OCI-LY7 (cell line): ENCODE measurements at regions of chr12 and their contacts with region 1.

Region 1: GRCh38 chr12:56448860-56449621 is at the start of gene TIMELESS:
- DNase-seq: peak; percentile 92
- H3K4me3 ChIP-seq: peak within 1 kb of the TSS; percentile 88
- H3K27ac ChIP-seq: peak within 1 kb of the TSS; percentile 90
- H3K4me1 ChIP-seq: peaks cover 25% of the 10 kb centered on the region
- CTCF ChIP-seq: no peak
- total RNA-seq, gene TIMELESS: 44.8 and 46.5 TPM in 2 replicates

Region 2: GRCh38 chr12:55336002-55336401 is 1113.0 kb before region 1 on chr12:
- CTCF ChIA-PET with region 1: no interaction called
- POLR2A ChIA-PET with region 1: no interaction called
- intact Hi-C with region 1: no loop called
- DNase-seq: no peak
- H3K4me3 ChIP-seq: no peak overlapping the region
- H3K27ac ChIP-seq: no peak overlapping the region
- H3K4me1 ChIP-seq: no peaks in the 10 kb centered on the region
- CTCF ChIP-seq: no peak

Region 3: GRCh38 chr12:56127888-56128669 is 321.0 kb before region 1 on chr12 and contains the start of gene ESYT1:
- CTCF ChIA-PET with region 1: no interaction called
- POLR2A ChIA-PET with region 1: no interaction called
- intact Hi-C with region 1: loop called (anchors 5 kb)
- DNase-seq: peak; percentile 100
- H3K4me3 ChIP-seq: peak within 1 kb of the TSS; percentile 83
- H3K27ac ChIP-seq: peak within 1 kb of the TSS; percentile 96
- H3K4me1 ChIP-seq: peaks cover 48% of the 10 kb centered on the region
- CTCF ChIP-seq: no peak
- total RNA-seq, gene ESYT1: 74.6 and 85.9 TPM in 2 replicates

Region 4: DNA sequence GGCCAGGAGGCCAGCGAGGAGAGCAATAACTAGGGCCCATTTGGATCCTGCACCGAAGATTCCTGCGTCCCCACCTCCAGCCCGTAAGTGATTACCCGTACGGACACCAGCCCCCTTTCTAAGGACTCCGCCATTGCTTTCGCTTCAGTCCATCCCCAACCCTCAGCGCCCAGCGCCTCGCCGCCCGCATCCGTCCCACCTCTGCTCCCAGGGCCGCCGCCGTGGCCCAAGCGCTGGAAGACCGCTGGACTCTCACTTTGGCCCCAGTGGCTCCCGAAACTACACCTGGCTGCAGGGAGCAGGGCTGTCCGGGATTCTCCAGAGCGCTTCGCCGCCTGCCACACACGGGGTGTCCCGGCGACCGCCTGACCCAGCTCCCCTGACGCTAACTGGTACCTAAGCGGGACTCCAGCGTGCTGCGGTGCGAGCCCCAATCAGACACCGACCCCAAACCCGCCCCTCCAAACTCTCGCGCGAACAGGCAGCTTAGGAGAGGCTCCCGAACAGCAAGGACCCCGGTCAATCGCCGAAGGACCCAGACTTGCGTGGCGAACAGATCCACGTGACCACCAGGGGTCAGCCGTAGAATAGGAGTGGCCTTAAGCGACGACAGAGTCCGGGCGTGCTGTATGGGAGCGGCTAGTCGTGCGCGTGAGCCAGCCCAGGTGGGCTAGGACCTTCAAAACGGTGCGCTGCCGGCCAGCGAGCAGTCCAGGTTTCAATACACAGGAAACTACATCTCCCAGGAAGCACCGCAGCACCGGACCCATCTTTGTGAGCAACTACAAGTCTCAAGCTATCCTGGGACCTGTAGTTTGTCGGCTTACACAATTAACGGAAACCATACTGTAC is 133.2 kb before region 1 on chr12 and contains the start of gene CNPY2:
- CTCF ChIA-PET with region 1: no interaction called
- POLR2A ChIA-PET with region 1: interaction called, 7 read pairs
- intact Hi-C with region 1: loop called (anchors 1 kb)
- DNase-seq: peak; percentile 96
- H3K4me3 ChIP-seq: peak within 1 kb of the TSS; percentile 83
- H3K27ac ChIP-seq: peak within 1 kb of the TSS; percentile 60
- H3K4me1 ChIP-seq: peaks cover 14% of the 10 kb centered on the region
- CTCF ChIP-seq: peak; percentile 48; the same call in 1 of the 2 replicates
- total RNA-seq, gene CNPY2: 62.8 and 75.5 TPM in 2 replicates

Region 5: DNA sequence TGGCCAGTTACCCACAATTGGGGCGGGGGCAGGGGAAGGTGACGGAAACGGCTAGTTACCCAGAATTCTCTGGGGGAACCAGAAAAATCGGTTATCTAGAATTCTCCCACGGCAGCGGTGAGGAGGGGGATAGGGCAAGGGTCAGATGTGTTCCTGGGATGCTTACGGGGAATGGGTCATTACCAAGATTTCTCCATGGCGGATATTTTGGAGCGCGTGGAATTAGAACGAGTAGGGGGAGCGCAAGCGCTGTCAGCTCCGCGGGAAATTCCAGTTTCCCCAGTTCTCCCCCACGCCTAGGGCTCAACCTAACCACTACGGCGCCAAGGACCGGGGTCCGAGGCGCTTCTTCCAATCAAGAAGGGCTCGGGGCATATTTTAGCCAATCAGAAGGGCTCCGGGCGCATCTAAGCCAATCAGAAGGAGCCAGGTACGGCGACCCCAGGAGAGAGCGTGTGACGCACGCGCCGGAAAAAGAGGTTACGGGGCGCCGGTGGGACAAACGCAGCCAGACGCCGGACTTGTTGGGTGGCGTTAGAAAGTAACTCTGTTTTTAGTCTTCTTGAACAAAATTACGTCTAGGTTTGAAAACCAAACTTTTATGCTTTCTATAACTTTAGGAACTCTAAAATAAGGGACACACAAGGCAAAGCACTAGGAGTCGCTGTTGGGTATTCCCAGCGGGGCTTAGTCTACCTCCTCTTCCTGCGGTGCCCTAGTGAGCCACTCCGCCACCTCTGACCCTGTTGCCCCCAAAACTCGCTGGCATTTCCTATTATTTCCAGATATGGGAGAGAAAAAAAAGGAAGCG is 115.2 kb before region 1 on chr12 and contains the start of gene PAN2:
- CTCF ChIA-PET with region 1: no interaction called
- POLR2A ChIA-PET with region 1: interaction called, 8 read pairs
- intact Hi-C with region 1: loop called (anchors 5 kb)
- DNase-seq: peak; percentile 99
- H3K4me3 ChIP-seq: peak within 1 kb of the TSS; percentile 95
- H3K27ac ChIP-seq: peak within 1 kb of the TSS; percentile 94
- H3K4me1 ChIP-seq: peaks cover 56% of the 10 kb centered on the region
- CTCF ChIP-seq: peak; percentile 78
- total RNA-seq, gene PAN2: 69.9 and 106 TPM in 2 replicates

Region 6: DNA sequence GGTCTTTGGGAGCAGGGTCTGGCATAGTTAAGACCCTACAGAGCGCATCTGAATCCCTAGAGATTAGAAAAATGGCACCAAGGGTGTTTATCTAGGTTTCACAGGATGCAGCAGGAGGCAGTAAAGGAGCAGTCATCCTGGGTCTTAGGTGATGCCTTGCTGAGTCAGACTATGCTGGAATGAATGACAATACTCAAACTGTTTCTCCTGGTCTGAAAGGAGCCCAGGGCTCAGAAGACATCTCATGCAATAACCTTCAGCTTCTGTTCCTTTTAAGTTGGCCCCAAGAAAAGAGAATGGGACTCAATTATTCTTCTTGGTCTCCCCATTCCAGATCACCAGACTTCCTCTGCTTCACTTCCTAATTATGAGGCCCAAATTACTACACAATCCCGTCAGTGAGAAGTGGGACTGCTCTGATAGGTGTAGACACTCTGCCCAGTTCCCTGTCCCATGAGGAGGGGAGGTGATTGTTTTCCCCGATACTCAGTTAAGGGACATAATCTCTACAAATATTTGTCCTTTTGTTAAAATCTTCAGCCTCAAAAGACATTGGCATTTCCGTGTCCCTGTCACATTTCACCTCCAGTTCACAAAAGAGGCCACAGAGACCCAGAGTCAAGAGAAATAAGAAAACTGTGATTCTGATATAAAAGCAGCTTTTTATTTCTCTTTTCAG is 71.6 kb before region 1 on chr12:
- CTCF ChIA-PET with region 1: no interaction called
- POLR2A ChIA-PET with region 1: interaction called, 14 read pairs
- intact Hi-C with region 1: loop called (anchors 1 kb)
- DNase-seq: peak; percentile 54
- H3K4me3 ChIP-seq: peak overlapping the region; percentile 3
- H3K27ac ChIP-seq: peak overlapping the region; percentile 93
- H3K4me1 ChIP-seq: peaks cover 49% of the 10 kb centered on the region
- CTCF ChIP-seq: peak; percentile 58

Region 7: GRCh38 chr12:56461235-56462159 is 12.5 kb after region 1 on chr12:
- CTCF ChIA-PET with region 1: interaction called, 10 read pairs
- POLR2A ChIA-PET with region 1: interaction called, 98 read pairs
- intact Hi-C with region 1: no loop called
- DNase-seq: no peak
- H3K4me3 ChIP-seq: no peak overlapping the region
- H3K27ac ChIP-seq: peak overlapping the region; percentile 96
- H3K4me1 ChIP-seq: peaks cover 49% of the 10 kb centered on the region
- CTCF ChIP-seq: no peak